Panc1 (cell line): ENCODE measurements at regions of chr5 and their contacts with region 1.

Region 1: GRCh38 chr5:140575309-140575708 is 10.7 kb downstream of the SLC35A4 start:
- DNase-seq: no peak
- ATAC-seq: peak; percentile 79
- H3K4me3 ChIP-seq: no peak overlapping the region
- H3K27ac ChIP-seq: no peak overlapping the region
- H3K4me1 ChIP-seq: no peaks in the 10 kb centered on the region
- H3K27me3 ChIP-seq: no peaks in the 10 kb centered on the region
- CTCF ChIP-seq: peak; percentile 68

Region 2: GRCh38 chr5:140594169-140594568 is 18.9 kb after region 1 on chr5:
- CTCF ChIA-PET with region 1: no interaction called
- POLR2A ChIA-PET with region 1: no interaction called
- in situ Hi-C with region 1: no loop called
- intact Hi-C with region 1: no loop called
- DNase-seq: no peak
- ATAC-seq: no peak
- H3K4me3 ChIP-seq: no peak overlapping the region
- H3K27ac ChIP-seq: no peak overlapping the region; the same call in 1 of the 2 replicates
- H3K4me1 ChIP-seq: no peaks in the 10 kb centered on the region
- H3K27me3 ChIP-seq: no peaks in the 10 kb centered on the region
- CTCF ChIP-seq: no peak

Region 3: DNA sequence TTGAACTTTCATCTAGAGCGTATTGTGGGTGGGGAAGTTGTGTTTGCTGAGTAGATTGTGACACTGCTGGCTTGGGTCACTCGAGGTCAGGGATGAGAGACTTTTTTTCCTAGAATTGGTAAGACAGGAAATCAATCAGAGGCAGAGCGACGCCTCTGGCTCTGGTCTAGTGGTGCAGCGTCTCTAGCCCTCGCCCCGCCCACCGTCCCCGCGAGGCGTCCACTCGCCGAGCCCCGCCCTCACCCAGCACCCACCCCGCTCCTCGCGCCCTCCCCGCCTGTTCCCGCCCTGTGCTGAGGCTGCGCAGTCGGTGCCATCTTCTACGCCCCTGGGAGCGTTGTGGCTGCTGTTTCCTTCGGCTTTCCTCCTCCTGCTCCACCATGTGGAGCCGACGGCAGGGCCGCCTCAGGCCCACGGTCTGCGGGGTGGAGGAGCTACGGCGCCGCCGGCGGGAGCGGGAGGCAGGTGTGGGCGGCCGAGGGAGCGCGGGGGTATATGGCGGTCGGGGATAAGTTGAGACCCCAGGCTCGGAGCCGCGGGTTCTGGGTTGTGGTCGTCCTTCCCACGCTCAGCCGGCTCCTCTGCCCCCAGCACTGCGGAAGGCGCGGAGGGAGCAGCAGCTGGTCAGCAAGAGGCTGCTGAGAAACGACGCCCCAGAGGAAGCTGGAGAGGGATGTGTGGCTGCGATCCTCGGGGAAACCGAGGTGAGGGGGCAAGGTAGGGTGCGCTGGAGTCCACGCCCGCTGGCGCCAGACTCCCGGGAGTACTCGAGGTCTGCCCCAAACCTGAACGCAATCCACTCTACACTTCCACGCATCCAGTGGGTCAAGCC is 64.1 kb after region 1 on chr5 and contains the start of gene TMCO6:
- CTCF ChIA-PET with region 1: no interaction called
- POLR2A ChIA-PET with region 1: no interaction called
- in situ Hi-C with region 1: no loop called
- intact Hi-C with region 1: loop called (anchors 5 kb)
- DNase-seq: peak; percentile 86
- ATAC-seq: peak; percentile 98
- H3K4me3 ChIP-seq: peak within 1 kb of the TSS; percentile 84 to 86
- H3K27ac ChIP-seq: peak within 1 kb of the TSS; percentile 92
- H3K4me1 ChIP-seq: 0 out of 2 replicates have a peak, but pooled peaks cover 5% of the 10 kb centered on the region
- H3K27me3 ChIP-seq: no peaks in the 10 kb centered on the region
- CTCF ChIP-seq: peak; percentile 87
- total RNA-seq, gene TMCO6: 18.9 TPM

Region 4: GRCh38 chr5:140710899-140711552 is 135.7 kb after region 1 on chr5:
- CTCF ChIA-PET with region 1: no interaction called
- POLR2A ChIA-PET with region 1: no interaction called
- in situ Hi-C with region 1: no loop called
- intact Hi-C with region 1: loop called (anchors 10 kb)
- DNase-seq: peak; percentile 100
- ATAC-seq: peak; percentile 95
- H3K4me3 ChIP-seq: peak overlapping the region; percentile 68 to 78
- H3K27ac ChIP-seq: peak overlapping the region; percentile 81
- H3K4me1 ChIP-seq: no peaks in the 10 kb centered on the region
- H3K27me3 ChIP-seq: no peaks in the 10 kb centered on the region
- CTCF ChIP-seq: no peak

Region 5: GRCh38 chr5:141051526-141051876 is 476.2 kb after region 1 on chr5:
- CTCF ChIA-PET with region 1: no interaction called
- POLR2A ChIA-PET with region 1: no interaction called
- in situ Hi-C with region 1: no loop called
- intact Hi-C with region 1: no loop called
- DNase-seq: no peak
- ATAC-seq: peak; percentile 62
- H3K4me3 ChIP-seq: peak overlapping the region; percentile 43 to 67
- H3K27ac ChIP-seq: no peak overlapping the region
- H3K4me1 ChIP-seq: no peaks in the 10 kb centered on the region
- H3K27me3 ChIP-seq: peaks cover 2% of the 10 kb centered on the region; the same call in 1 of the 2 replicates
- CTCF ChIP-seq: no peak